Activated naive CD4-positive, alpha-beta T cell treated with anti-CD3 and anti-CD28 coated beads for 36 hours (primary cell): ENCODE measurements at regions of chr13 and their contacts with region 1.

Region 1: DNA sequence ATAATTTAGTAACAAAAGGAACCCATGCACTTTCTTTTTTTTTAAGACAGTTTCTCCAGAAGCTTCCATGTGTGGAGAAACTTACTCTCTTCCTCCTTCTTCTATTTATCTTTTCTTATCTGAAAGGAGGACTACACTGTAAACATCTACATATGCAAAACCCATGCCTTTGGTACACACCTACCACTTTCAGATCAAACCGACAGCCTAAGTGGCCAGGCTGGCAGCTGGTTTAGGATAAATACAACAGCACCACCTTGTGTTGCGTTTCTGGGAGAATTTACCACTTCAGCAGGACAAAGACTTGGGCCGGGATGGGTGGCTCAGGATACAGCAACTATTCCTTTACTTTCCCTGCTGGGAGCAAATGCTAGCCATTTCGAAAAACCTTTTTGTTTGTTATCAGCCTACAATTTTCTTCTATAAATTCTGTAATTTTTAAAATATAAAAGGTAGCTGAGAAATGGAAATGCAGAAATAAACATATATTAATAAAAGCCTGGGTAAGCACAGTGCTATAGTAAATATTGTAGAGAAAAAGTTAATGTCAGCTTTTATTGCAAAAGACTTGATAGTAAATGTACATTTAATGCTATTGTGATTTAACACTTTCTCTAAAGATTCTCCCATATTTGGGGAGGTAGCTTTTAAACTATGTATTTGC is 94.0 kb upstream of the RFC3 start:
- DNase-seq: peak; percentile 82
- H3K4me3 Mint-ChIP-seq: no peak overlapping the region
- H3K27ac Mint-ChIP-seq: no peak overlapping the region
- H3K4me1 Mint-ChIP-seq: peaks cover 27% of the 10 kb centered on the region
- H3K27me3 Mint-ChIP-seq: no peaks in the 10 kb centered on the region

Region 2: GRCh38 chr13:33033051-33033812 is 690.7 kb before region 1 on chr13:
- CTCF ChIA-PET with region 1: no interaction called
- intact Hi-C with region 1: loop called (anchors 5 kb)
- DNase-seq: peak; percentile 56
- H3K4me3 Mint-ChIP-seq: peak overlapping the region; percentile 74
- H3K27ac Mint-ChIP-seq: peak overlapping the region; percentile 87
- H3K4me1 Mint-ChIP-seq: peaks cover 7% of the 10 kb centered on the region
- H3K27me3 Mint-ChIP-seq: peaks cover 1% of the 10 kb centered on the region

Region 3: GRCh38 chr13:33612641-33613638 is 111.0 kb before region 1 on chr13:
- CTCF ChIA-PET with region 1: no interaction called
- intact Hi-C with region 1: loop called (anchors 2 kb)
- DNase-seq: peak; percentile 63
- H3K4me3 Mint-ChIP-seq: peak overlapping the region; percentile 5
- H3K27ac Mint-ChIP-seq: peak overlapping the region; percentile 86
- H3K4me1 Mint-ChIP-seq: peaks cover 40% of the 10 kb centered on the region
- H3K27me3 Mint-ChIP-seq: peaks cover 6% of the 10 kb centered on the region

Region 4: DNA sequence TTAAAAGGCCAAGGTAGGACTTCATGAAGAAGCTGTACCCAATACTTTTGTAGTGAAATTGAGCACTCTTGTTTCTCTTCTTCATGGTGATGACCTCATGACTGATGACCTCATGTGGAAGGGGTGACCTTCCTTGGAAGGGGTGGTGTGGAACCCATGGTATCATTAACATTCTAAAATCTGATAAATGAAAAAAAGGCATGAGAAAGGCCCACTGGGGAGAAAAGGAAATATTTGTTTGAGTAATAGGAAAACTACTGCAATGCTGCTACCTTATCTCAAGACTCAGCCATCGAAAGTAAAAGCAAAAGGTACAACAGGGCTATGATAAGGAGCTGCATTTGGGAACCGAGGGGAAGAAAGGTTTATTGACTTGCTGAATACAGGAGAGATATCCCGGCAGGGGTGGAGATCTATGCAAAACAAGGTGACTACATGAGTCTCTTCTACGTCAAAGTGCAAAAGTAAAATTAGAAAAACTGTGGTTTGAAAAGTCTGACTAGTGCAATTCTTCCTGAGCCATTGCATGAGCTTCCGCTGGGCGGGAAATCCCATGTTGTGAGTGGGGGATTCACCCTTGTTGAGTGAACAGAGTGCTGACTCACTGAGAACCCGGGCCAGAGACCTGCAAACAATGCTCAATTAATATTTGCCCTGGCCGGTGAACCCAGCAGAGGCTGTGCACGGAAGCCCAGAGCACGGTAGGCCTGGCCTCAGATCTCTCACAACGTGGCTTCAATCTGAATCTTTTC is 44.8 kb before region 1 on chr13:
- CTCF ChIA-PET with region 1: no interaction called
- intact Hi-C with region 1: loop called (anchors 1 kb)
- DNase-seq: peak; percentile 90
- H3K4me3 Mint-ChIP-seq: peak overlapping the region; percentile 49
- H3K27ac Mint-ChIP-seq: peak overlapping the region; percentile 93
- H3K4me1 Mint-ChIP-seq: peaks cover 30% of the 10 kb centered on the region
- H3K27me3 Mint-ChIP-seq: peaks cover 3% of the 10 kb centered on the region

Region 5: GRCh38 chr13:35157143-35157755 is 1433.3 kb after region 1 on chr13:
- CTCF ChIA-PET with region 1: no interaction called
- intact Hi-C with region 1: loop called (anchors 2 kb)
- DNase-seq: peak; percentile 53
- H3K4me3 Mint-ChIP-seq: no peak overlapping the region
- H3K27ac Mint-ChIP-seq: no peak overlapping the region
- H3K4me1 Mint-ChIP-seq: peaks cover 3% of the 10 kb centered on the region
- H3K27me3 Mint-ChIP-seq: no peaks in the 10 kb centered on the region